ENCODE measurements at regions of chr15 and their contacts with region 1.

Region 1: DNA sequence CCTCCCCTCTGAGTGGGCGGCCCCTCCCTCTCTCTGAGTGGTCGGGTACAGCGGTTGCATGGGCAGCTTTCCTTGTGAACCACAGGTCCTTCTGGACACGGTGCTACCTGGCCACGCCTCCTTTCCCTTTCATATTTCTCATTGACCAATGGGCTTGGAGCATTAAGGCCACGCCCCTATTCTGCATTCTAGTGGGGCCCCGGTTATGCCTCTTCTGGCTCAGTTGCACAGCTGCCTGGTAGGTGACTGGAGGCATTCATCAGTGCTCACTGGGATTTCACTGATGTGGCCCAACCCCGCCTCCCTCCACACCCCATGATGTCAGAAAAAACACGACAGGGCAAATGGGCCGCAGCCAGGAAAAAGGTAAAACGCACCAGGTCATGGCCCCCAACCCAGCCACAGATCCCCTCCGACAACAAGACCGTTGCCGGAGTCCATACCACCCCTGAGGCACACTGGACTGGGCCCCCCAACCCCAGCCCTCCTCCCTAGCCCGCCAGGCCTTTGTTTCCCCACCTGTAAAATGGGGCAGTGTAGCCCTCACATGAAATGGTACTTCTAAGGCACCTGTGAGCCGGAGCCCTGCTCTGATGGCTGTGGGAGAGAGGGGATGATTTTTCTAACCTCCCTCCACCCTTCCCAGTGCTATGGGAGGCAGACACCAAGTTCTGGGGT is 26.3 kb downstream of the NGRN start:
- DNase-seq: peak; percentile 69
- H3K4me3 Mint-ChIP-seq: no peak overlapping the region
- H3K27ac Mint-ChIP-seq: no peak overlapping the region
- H3K4me1 Mint-ChIP-seq: peaks cover 6% of the 10 kb centered on the region
- H3K27me3 Mint-ChIP-seq: no peaks in the 10 kb centered on the region
- CTCF ChIP-seq: no peak

Region 2: GRCh38 chr15:90143166-90143655 is 148.6 kb before region 1 on chr15:
- CTCF ChIA-PET with region 1: interaction called, 12 read pairs
- POLR2A ChIA-PET with region 1: no interaction called
- intact Hi-C with region 1: no loop called
- DNase-seq: peak; percentile 69
- H3K4me3 Mint-ChIP-seq: no peak overlapping the region
- H3K27ac Mint-ChIP-seq: no peak overlapping the region
- H3K4me1 Mint-ChIP-seq: no peaks in the 10 kb centered on the region
- H3K27me3 Mint-ChIP-seq: no peaks in the 10 kb centered on the region
- CTCF ChIP-seq: peak; percentile 85

Region 3: GRCh38 chr15:90271459-90272166 is 20.2 kb before region 1 on chr15:
- CTCF ChIA-PET with region 1: interaction called, 17 read pairs
- POLR2A ChIA-PET with region 1: interaction called, 4 read pairs
- intact Hi-C with region 1: no loop called
- DNase-seq: no peak
- H3K4me3 Mint-ChIP-seq: no peak overlapping the region
- H3K27ac Mint-ChIP-seq: no peak overlapping the region
- H3K4me1 Mint-ChIP-seq: peaks cover 23% of the 10 kb centered on the region
- H3K27me3 Mint-ChIP-seq: no peaks in the 10 kb centered on the region
- CTCF ChIP-seq: no peak

Region 4: GRCh38 chr15:90306560-90306959 is 14.7 kb after region 1 on chr15:
- CTCF ChIA-PET with region 1: interaction called, 38 read pairs
- POLR2A ChIA-PET with region 1: interaction called, 3 read pairs
- intact Hi-C with region 1: no loop called
- DNase-seq: no peak
- H3K4me3 Mint-ChIP-seq: no peak overlapping the region
- H3K27ac Mint-ChIP-seq: no peak overlapping the region
- H3K4me1 Mint-ChIP-seq: peaks cover under 1% of the 10 kb centered on the region
- H3K27me3 Mint-ChIP-seq: peaks cover 4% of the 10 kb centered on the region
- CTCF ChIP-seq: no peak

Region 5: GRCh38 chr15:90482124-90483011 is 190.6 kb after region 1 on chr15:
- CTCF ChIA-PET with region 1: interaction called, 54 read pairs
- POLR2A ChIA-PET with region 1: no interaction called
- intact Hi-C with region 1: loop called (anchors 1 kb)
- DNase-seq: peak; percentile 51
- H3K4me3 Mint-ChIP-seq: no peak overlapping the region
- H3K27ac Mint-ChIP-seq: no peak overlapping the region
- H3K4me1 Mint-ChIP-seq: peaks cover 18% of the 10 kb centered on the region
- H3K27me3 Mint-ChIP-seq: no peaks in the 10 kb centered on the region
- CTCF ChIP-seq: peak; percentile 56

Region 6: GRCh38 chr15:90691982-90692773 is 400.4 kb after region 1 on chr15:
- CTCF ChIA-PET with region 1: interaction called, 3 read pairs
- POLR2A ChIA-PET with region 1: no interaction called
- intact Hi-C with region 1: loop called (anchors 2 kb)
- DNase-seq: no peak
- H3K4me3 Mint-ChIP-seq: no peak overlapping the region
- H3K27ac Mint-ChIP-seq: no peak overlapping the region
- H3K4me1 Mint-ChIP-seq: no peaks in the 10 kb centered on the region
- H3K27me3 Mint-ChIP-seq: peaks cover 10% of the 10 kb centered on the region
- CTCF ChIP-seq: no peak

Measured in MCF 10A (cell line).